Heart right ventricle (tissue), 16 donors: ENCODE measurements at regions of chr19 and their contacts with region 1.

Region 1: GRCh38 chr19:17996826-17997316 is 11.1 kb upstream of the ARRDC2 start:
- DNase-seq: peak; percentile 83 to 88
- ATAC-seq: peak; percentile 70 to 90 (median 84)
- H3K4me3 ChIP-seq: no peak overlapping the region
- H3K27ac ChIP-seq: no peak overlapping the region
- H3K4me1 ChIP-seq: peaks cover 0 to 16% (median 5%) of the 10 kb centered on the region in 9 donors
- H3K27me3 ChIP-seq: peaks cover 0 to 18% (median 4%) of the 10 kb centered on the region in 7 donors
- CTCF ChIP-seq: peak; percentile 92 to 99 (median 98)

Region 2: GRCh38 chr19:17865364-17866311 is 131.2 kb before region 1 on chr19:
- intact Hi-C with region 1: loop called in 6 of 10 experiments (anchors 5 to 10 kb)
- DNase-seq: no peak
- ATAC-seq: peak in 2 of 8 donors; percentile 3 to 5
- H3K4me3 ChIP-seq: no peak overlapping the region
- H3K27ac ChIP-seq: no peak overlapping the region
- H3K4me1 ChIP-seq: peaks cover 8 to 27% (median 17%) of the 10 kb centered on the region in 9 donors
- H3K27me3 ChIP-seq: peaks cover 0 to 17% (median 10%) of the 10 kb centered on the region in 7 donors
- CTCF ChIP-seq: no peak

Region 3: GRCh38 chr19:17873786-17874757 is 122.8 kb before region 1 on chr19:
- intact Hi-C with region 1: loop called in 4 of 10 experiments (anchors 5 to 10 kb)
- DNase-seq: no peak
- ATAC-seq: peak in 4 of 8 donors; percentile 11 to 32 (median 28)
- H3K4me3 ChIP-seq: peak overlapping the region in 1 of 10 donors; percentile 34
- H3K27ac ChIP-seq: no peak overlapping the region
- H3K4me1 ChIP-seq: peaks cover 0 to 25% (median 18%) of the 10 kb centered on the region in 9 donors
- H3K27me3 ChIP-seq: peaks cover 38 to 86% (median 70%) of the 10 kb centered on the region in 7 donors
- CTCF ChIP-seq: no peak

Region 4: GRCh38 chr19:17938092-17938845 is 58.6 kb before region 1 on chr19:
- intact Hi-C with region 1: loop called (anchors 1 to 5 kb)
- DNase-seq: peak; percentile 74 to 76
- ATAC-seq: peak; percentile 75 to 88 (median 85)
- H3K4me3 ChIP-seq: no peak overlapping the region
- H3K27ac ChIP-seq: no peak overlapping the region
- H3K4me1 ChIP-seq: peaks cover 5 to 14% (median 9%) of the 10 kb centered on the region in 9 donors
- H3K27me3 ChIP-seq: no peaks in the 10 kb centered on the region
- CTCF ChIP-seq: peak; percentile 82 to 97 (median 94)

Region 5: DNA sequence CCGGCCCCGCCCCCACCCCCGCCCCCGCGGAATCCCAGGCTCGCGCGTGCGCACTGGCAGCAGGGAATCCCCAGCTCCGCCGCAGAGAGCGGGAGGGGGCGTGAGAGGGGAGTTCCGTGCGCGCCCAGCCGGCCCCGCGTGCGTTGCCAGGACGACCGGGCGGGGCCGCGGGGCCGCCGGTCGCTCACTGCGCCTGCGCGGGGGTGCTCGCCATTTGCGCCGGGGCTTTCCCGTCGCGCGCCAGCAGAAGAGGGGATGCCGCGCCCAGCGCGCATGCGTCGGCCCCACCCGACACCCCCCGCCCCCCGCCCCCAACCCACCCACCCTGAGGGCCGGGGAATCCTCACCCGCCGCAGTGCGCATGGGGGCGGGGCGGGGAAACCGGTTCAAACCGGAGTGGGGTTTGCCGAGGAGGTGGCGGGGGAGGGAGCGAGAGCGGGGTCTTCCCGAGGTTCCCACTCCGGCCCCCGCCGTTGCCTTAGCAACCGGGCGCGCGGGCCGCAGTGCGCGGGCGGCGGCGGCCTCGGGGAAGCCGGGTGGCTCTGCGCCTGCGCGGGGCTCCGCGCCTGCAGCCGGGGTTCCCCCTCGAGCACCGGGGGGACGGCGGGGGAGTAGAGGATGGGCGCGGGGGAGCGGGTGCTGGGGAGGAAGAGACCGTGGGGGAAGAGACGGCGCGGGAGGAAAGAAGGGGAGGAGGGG is 48.9 kb before region 1 on chr19:
- intact Hi-C with region 1: loop called in 3 of 10 experiments (anchors 2 kb)
- DNase-seq: peak; percentile 90 to 94
- ATAC-seq: peak; percentile 84 to 93 (median 92)
- H3K4me3 ChIP-seq: peak overlapping the region; percentile 62 to 92 (median 74)
- H3K27ac ChIP-seq: peak overlapping the region in 6 of 10 donors; percentile 44 to 82 (median 61)
- H3K4me1 ChIP-seq: peaks cover 29 to 54% (median 48%) of the 10 kb centered on the region in 9 donors
- H3K27me3 ChIP-seq: peaks cover 17 to 50% (median 43%) of the 10 kb centered on the region in 7 donors
- CTCF ChIP-seq: no peak

Region 6: DNA sequence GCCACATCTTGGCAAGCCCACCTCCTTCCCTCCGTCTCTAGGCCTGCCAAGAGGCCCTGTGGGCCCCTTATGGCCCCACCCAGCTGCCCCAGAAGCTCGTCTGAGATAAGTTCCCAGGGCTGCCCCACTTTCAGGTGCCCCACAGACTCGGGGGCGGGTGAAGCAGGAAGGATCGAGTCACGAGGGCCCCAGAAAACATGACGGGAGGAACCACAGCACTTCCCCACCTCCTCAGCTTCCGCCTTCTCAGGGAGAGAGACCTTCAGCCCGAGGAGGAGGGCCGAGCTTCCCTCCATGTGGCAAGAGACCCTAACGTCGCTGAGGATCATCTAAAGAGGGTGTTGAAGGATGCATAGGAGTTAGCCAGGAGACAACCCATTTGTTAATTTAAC is 94.3 kb after region 1 on chr19:
- intact Hi-C with region 1: no loop called
- DNase-seq: peak; percentile 32
- ATAC-seq: peak in 6 of 8 donors; percentile 57 to 75 (median 64)
- H3K4me3 ChIP-seq: no peak overlapping the region
- H3K27ac ChIP-seq: peak overlapping the region in 5 of 10 donors; percentile 13 to 92 (median 43)
- H3K4me1 ChIP-seq: peaks cover 0 to 52% (median 0%) of the 10 kb centered on the region in 9 donors
- H3K27me3 ChIP-seq: peaks cover 0 to 17% (median 0%) of the 10 kb centered on the region in 7 donors
- CTCF ChIP-seq: no peak